Activated T-helper 1 cell treated with anti-CD3 and anti-CD28 coated beads, Interleukin-12 subunit alpha, Interleukin-12 subunit beta, Interleukin-2, Interleukin-4 antibody, amounts not matched to agents 30 ng/mL and 10 ng/mL and 1 ng/mL, durations not matched to agents 14 hours and 24 hours and 36 hours (primary cell): ENCODE measurements at regions of chr12 and their contacts with region 1.

Region 1: DNA sequence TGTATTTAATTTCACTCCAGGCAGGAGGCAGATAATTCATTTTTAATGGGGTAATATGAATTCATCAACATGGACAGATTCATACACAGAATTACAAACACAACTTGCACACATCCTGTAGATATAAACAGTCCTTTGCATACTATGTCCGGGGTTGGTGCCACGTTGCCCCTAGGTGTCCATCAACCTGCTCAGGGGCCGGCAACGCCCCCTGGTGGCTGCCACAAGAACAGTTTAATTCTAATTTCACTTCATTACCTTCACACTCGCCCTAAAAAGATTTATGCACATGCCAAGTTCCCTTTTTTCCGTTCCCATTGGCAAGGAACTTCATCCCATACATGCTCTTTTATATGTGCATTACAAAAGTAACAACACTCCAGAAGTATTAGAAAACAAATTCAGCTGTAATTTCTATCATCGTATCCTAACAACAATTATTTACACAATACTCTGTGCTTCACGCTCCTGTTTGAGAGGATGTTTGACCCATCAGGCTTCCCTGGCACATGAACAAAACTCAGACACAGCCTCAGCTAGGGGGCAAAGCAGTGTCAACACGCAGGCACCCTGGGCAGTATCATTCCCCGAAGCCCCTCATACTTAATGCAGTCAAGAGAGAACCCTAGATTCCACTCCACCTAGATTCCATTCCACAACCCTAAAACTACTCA is 15.5 kb downstream of the MANSC1 start:
- DNase-seq: peak; percentile 38
- H3K4me3 Mint-ChIP-seq: no peak overlapping the region
- H3K27ac Mint-ChIP-seq: no peak overlapping the region
- H3K4me1 Mint-ChIP-seq: peaks cover 44% of the 10 kb centered on the region
- H3K27me3 Mint-ChIP-seq: no peaks in the 10 kb centered on the region

Region 2: DNA sequence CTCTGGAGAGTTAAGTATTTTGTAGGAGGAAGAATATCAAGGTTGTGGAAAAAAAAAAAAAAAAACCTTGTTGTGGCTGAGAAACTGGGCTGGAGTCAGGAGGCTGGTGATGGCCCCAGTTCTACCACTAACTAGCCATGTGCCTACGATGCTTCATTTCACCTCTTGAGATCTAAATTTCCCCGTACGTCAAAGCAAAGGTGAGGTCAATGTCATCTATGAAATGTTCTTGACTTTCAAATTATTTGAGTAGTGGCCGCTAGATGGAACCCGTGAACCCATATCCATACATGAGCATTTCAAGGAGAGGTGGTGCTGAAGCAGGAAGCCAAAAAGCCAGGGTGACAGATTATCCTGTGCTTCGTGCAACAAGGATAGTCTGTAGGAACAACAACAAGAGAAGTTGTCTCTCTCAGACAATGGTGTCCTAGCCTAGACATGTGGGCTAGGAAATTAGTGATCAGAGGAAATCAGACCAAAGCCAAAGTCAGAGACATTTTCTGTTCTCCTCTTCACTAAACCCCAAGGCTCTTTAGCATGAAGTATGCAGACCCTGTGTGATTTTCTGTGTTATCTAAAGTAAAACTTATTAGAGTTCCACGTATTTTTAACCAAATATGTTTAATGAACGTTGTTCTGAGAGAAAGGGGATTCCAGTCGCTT is 780.5 kb before region 1 on chr12:
- intact Hi-C with region 1: loop called (anchors 1 kb)
- DNase-seq: peak; percentile 33
- H3K4me3 Mint-ChIP-seq: peak overlapping the region; percentile 45
- H3K27ac Mint-ChIP-seq: no peak overlapping the region
- H3K4me1 Mint-ChIP-seq: peaks cover 27% of the 10 kb centered on the region
- H3K27me3 Mint-ChIP-seq: peaks cover 8% of the 10 kb centered on the region

Region 3: DNA sequence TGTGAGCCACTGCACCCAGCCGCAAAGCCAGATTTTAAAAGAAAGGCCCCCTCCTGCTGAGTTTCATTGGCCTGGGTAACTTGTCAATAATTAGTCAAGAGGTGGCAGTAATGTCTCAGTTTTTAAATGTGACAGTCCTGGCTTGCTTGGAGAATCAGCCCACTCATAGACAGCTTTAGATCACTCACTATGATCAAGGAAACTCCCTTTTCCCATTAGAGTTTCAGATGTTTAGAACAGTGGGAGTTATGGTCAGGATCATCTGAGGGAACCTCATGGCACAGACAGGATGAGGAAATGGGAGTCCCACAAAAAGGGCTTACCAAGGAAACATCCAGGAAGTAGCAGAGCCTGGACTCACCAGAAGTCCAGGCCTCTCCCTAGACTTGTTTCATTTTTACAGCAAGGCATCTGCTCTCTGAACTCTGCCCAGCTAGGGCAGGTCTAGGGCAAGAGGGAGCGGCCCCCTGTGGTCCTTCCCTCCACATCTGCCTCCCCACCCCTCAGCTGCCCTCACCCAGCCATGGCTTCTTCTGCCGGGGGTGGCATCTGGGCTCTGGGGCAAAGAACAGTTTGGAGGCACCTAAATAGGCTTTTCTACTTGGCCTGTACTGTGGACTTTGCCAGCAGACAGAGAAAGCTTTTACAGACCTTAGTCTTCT is 252.5 kb before region 1 on chr12:
- intact Hi-C with region 1: loop called (anchors 2 kb)
- DNase-seq: no peak
- H3K4me3 Mint-ChIP-seq: no peak overlapping the region
- H3K27ac Mint-ChIP-seq: no peak overlapping the region
- H3K4me1 Mint-ChIP-seq: no peaks in the 10 kb centered on the region
- H3K27me3 Mint-ChIP-seq: no peaks in the 10 kb centered on the region

Region 4: DNA sequence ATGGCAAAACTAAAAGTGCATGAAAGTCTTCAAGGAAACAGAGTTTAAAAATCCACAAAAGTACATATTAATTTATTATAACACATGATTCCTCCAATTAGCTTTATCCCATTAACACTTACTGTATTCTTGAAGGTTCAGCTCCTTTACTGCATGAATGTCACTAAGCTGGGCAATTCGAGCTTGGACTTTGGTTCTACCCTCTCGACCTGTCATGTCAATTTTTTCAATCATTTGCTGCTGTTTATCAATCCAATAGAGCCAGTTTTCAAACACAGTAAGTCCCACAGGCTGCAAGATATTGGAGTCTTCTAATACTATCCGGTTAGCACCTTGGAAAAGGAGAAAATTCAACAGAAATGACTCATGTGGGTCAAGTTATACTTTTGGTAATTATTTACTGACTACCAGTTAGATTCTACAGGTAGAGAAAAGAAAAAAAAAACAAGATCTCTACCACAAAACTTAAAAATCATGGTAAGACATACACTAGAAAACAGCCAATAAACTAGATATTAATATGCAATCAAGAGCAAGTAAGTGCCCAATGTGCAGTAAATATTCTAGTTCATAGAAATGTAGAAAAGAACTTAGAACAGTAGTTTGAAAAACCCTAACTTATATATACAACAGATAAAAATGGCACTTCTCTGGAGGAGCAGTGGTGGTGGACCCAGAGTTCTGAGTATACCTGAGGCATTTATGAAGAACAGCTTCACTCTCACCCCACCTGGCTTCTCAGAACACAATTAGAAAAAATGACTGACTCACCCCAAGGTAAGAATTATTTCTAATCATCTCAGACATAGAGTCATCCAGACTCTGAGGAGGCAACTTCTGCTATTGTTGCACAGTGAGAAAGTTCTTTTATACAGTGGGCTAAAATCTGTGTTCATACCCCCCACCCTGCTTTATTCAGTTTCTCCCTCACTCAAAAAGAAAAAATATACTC is 196.0 kb before region 1 on chr12:
- intact Hi-C with region 1: no loop called
- DNase-seq: no peak
- H3K4me3 Mint-ChIP-seq: no peak overlapping the region
- H3K27ac Mint-ChIP-seq: no peak overlapping the region
- H3K4me1 Mint-ChIP-seq: no peaks in the 10 kb centered on the region
- H3K27me3 Mint-ChIP-seq: peaks cover 11% of the 10 kb centered on the region

Region 5: DNA sequence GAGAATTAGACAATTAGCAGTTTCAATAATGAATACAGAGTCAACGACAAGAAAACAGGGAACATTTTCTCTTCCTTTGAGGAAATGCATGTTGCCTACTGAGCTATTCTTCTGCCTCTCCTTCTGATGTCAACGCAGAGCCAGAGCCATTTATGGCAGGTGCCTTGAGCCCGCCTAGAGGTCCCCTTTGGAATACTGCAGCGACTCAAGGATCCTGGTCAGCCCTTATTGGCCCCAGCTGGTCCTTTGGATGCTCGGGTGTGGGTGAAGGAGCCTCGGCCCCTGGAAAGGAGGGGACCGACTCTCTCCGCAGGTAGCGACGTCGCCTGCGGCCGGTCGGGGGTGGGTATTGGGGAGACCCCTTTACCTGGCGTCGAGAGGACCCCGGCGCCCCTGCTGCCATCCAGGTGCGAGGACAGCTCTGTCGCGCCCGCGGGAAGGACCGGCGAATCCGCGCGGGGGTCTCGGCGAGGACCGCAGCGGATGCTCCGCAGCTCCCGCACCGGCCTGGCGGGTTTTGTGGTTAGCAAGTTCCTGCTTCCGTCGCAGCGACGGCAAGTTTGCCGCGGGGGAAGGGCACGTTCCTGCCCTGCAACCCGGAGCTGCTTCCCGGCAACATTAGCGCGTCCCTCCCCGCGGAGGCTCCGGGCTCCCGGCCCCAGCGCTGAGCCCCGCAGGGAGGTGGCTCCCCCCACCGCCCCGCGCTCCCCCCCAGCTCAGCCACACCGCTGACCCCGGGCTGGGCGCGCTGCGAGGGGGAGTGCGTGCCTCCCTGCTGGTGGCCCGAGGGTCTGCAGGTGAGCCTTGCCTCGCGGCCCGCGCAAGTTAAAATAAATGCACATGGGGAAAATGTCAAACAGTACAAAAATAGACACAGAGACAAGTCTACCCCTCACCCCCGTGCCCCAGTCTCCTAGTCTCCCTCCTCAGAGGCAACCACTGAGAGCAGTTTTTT is 15.5 kb after region 1 on chr12 and contains the start of gene MANSC1:
- intact Hi-C with region 1: no loop called
- DNase-seq: peak; percentile 38
- H3K4me3 Mint-ChIP-seq: peak within 1 kb of the TSS; percentile 75
- H3K27ac Mint-ChIP-seq: peak within 1 kb of the TSS; percentile 75
- H3K4me1 Mint-ChIP-seq: peaks cover 21% of the 10 kb centered on the region
- H3K27me3 Mint-ChIP-seq: no peaks in the 10 kb centered on the region
- total RNA-seq, gene MANSC1: 0.83 and 1.4 TPM in 2 replicates